Activated CD8-positive, alpha-beta memory T cell treated with anti-CD3 and anti-CD28 coated beads, Interleukin-2, amount 10 ng/mL, durations not matched to agents 7 days and 5 days (primary cell): ENCODE measurements at regions of chr19 and their contacts with region 1.

Region 1: DNA sequence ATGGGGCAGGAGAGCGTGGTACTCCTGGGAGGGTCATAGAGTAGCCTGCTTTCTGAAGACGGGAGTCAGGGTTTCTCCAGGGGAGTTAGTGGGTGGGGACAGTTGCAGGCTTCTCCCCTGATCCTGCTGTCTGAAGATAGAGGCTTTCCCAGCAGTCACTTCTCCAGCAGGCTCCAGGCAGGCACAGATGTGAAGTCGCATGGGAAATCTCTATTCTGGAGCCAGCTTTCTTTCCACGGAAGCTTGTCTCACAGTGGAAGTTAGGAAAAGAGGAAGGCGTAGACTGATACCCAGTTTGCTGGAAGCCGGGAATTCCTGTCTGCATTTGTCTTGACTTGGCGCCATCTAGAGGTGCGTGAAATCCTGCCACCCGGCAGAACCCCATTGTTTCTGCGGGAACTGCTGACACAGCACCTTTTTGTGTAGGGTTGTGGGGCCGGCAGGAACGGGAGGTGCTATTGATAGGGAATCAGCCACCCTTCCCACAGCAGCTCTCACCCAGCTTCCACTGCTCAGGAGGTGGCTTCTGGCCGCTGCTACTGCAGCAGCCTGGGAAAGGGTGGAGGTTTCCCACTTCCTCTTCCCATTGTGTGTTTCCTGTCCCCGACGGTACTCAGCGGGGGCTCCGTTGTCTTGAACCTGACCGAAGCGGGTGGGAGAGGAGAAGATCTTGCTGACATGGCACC is 28.5 kb upstream of the NPAS1 start:
- DNase-seq: peak; percentile 77
- ATAC-seq: peak; percentile 76
- H3K4me3 Mint-ChIP-seq: no peak overlapping the region
- H3K27ac Mint-ChIP-seq: peak overlapping the region; percentile 64
- H3K4me1 Mint-ChIP-seq: peaks cover 16% of the 10 kb centered on the region
- H3K27me3 Mint-ChIP-seq: no peaks in the 10 kb centered on the region

Region 2: GRCh38 chr19:46856050-46857022 is 134.8 kb before region 1 on chr19:
- CTCF ChIA-PET with region 1: interaction called, 42 read pairs
- DNase-seq: peak; percentile 95
- ATAC-seq: peak; percentile 74
- H3K4me3 Mint-ChIP-seq: peak overlapping the region; percentile 66
- H3K27ac Mint-ChIP-seq: peak overlapping the region; percentile 75
- H3K4me1 Mint-ChIP-seq: peaks cover 22% of the 10 kb centered on the region
- H3K27me3 Mint-ChIP-seq: no peaks in the 10 kb centered on the region

Region 3: GRCh38 chr19:46972311-46972710 is 18.8 kb before region 1 on chr19:
- CTCF ChIA-PET with region 1: interaction called, 15 read pairs
- DNase-seq: no peak
- ATAC-seq: no peak
- H3K4me3 Mint-ChIP-seq: no peak overlapping the region
- H3K27ac Mint-ChIP-seq: no peak overlapping the region
- H3K4me1 Mint-ChIP-seq: peaks cover 41% of the 10 kb centered on the region
- H3K27me3 Mint-ChIP-seq: no peaks in the 10 kb centered on the region

Region 4: GRCh38 chr19:46979126-46980105 is 11.7 kb before region 1 on chr19:
- CTCF ChIA-PET with region 1: interaction called, 15 read pairs
- DNase-seq: no peak
- ATAC-seq: no peak
- H3K4me3 Mint-ChIP-seq: no peak overlapping the region
- H3K27ac Mint-ChIP-seq: no peak overlapping the region
- H3K4me1 Mint-ChIP-seq: peaks cover 42% of the 10 kb centered on the region
- H3K27me3 Mint-ChIP-seq: no peaks in the 10 kb centered on the region